HCT116 (cell line): ENCODE measurements at regions of chr10 and their contacts with region 1.

Region 1: GRCh38 chr10:88756660-88757059 is 3.2 kb upstream of the LIPN start:
- DNase-seq: no peak
- ATAC-seq: no peak
- H3K4me3 ChIP-seq: no peak overlapping the region
- H3K27ac ChIP-seq: no peak overlapping the region
- H3K4me1 ChIP-seq: peaks cover 0 to 4% of the 10 kb centered on the region in 2 experiments; a peak in 1 of 4 replicates
- H3K27me3 ChIP-seq: no peaks in the 10 kb centered on the region
- CTCF ChIP-seq: no peak
- POLR2A ChIP-seq: no peak
- RAD21 ChIP-seq: no peak

Region 2: DNA sequence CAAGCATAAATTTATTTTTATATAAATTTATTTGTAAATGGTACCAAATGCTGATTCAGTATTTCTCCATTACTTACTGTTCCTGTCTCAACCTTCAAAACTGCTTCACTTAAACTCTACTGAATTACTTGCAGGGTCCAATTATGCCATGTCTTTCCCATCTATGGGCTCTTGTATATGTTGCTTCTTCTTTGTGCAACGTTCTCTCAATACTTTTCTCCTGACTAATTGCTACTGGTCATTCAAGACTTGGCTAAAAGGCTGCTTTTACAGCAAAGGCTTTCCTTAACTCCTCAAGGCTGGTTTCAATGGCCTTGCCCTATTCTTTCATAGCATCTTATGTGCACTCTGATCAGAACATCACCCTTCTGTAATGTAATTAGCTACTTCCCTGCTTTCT is 241.4 kb before region 1 on chr10:
- CTCF ChIA-PET with region 1: no interaction called
- POLR2A ChIA-PET with region 1: no interaction called
- RAD21 ChIA-PET with region 1: no interaction called
- intact Hi-C with region 1: no loop called
- DNase-seq: no peak
- ATAC-seq: no peak
- H3K4me3 ChIP-seq: no peak overlapping the region
- H3K27ac ChIP-seq: no peak overlapping the region
- H3K4me1 ChIP-seq: no peaks in the 10 kb centered on the region
- H3K27me3 ChIP-seq: no peaks in the 10 kb centered on the region
- CTCF ChIP-seq: no peak
- POLR2A ChIP-seq: no peak
- RAD21 ChIP-seq: no peak

Region 3: GRCh38 chr10:88783724-88784123 is 27.1 kb after region 1 on chr10:
- CTCF ChIA-PET with region 1: no interaction called
- POLR2A ChIA-PET with region 1: no interaction called
- RAD21 ChIA-PET with region 1: no interaction called
- intact Hi-C with region 1: loop called (anchors 1 kb)
- DNase-seq: no peak
- ATAC-seq: no peak
- H3K4me3 ChIP-seq: no peak overlapping the region
- H3K27ac ChIP-seq: no peak overlapping the region
- H3K4me1 ChIP-seq: no peaks in the 10 kb centered on the region
- H3K27me3 ChIP-seq: no peaks in the 10 kb centered on the region
- CTCF ChIP-seq: no peak
- POLR2A ChIP-seq: no peak
- RAD21 ChIP-seq: no peak

Region 4: GRCh38 chr10:88793747-88794299 is 37.2 kb after region 1 on chr10:
- CTCF ChIA-PET with region 1: no interaction called
- POLR2A ChIA-PET with region 1: no interaction called
- RAD21 ChIA-PET with region 1: no interaction called
- intact Hi-C with region 1: no loop called
- DNase-seq: no peak
- ATAC-seq: no peak
- H3K4me3 ChIP-seq: no peak overlapping the region
- H3K27ac ChIP-seq: no peak overlapping the region
- H3K4me1 ChIP-seq: peaks cover 6 to 10% of the 10 kb centered on the region in 2 experiments; a peak in 3 of 4 replicates
- H3K27me3 ChIP-seq: no peaks in the 10 kb centered on the region
- CTCF ChIP-seq: no peak
- POLR2A ChIP-seq: no peak
- RAD21 ChIP-seq: no peak